ENCODE measurements at regions of chr1 and their contacts with region 1.

Region 1: GRCh38 chr1:161792740-161793139 is 26.6 kb downstream of the ATF6 start:
- DNase-seq: peak; percentile 36
- CTCF ChIP-seq: peak; percentile 42

Region 2: GRCh38 chr1:162023547-162024501 is 231.1 kb after region 1 on chr1 and contains the start of gene OLFML2B:
- in situ Hi-C with region 1: loop called (anchors 10 kb)
- DNase-seq: peak; percentile 72
- CTCF ChIP-seq: no peak

Measured in GM13976 (cell line).